Vagina (tissue), 2 donors: ENCODE measurements at regions of chr9 and their contacts with region 1.

Region 1: GRCh38 chr9:71285191-71285656 is 163.8 kb upstream of the TRPM3 start:
- DNase-seq: no peak
- H3K4me3 ChIP-seq: no peak overlapping the region
- H3K27ac ChIP-seq: no peak overlapping the region
- H3K4me1 ChIP-seq: peaks cover 5% of the 10 kb centered on the region
- H3K27me3 ChIP-seq: no peaks in the 10 kb centered on the region
- CTCF ChIP-seq: peak; percentile 71 to 77 (median 73)
- POLR2A ChIP-seq: no peak

Region 2: GRCh38 chr9:71079451-71079850 is 205.8 kb before region 1 on chr9:
- intact Hi-C with region 1: no loop called
- DNase-seq: no peak
- H3K4me3 ChIP-seq: no peak overlapping the region
- H3K27ac ChIP-seq: no peak overlapping the region
- H3K4me1 ChIP-seq: no peaks in the 10 kb centered on the region
- H3K27me3 ChIP-seq: no peaks in the 10 kb centered on the region
- CTCF ChIP-seq: no peak
- POLR2A ChIP-seq: no peak

Region 3: DNA sequence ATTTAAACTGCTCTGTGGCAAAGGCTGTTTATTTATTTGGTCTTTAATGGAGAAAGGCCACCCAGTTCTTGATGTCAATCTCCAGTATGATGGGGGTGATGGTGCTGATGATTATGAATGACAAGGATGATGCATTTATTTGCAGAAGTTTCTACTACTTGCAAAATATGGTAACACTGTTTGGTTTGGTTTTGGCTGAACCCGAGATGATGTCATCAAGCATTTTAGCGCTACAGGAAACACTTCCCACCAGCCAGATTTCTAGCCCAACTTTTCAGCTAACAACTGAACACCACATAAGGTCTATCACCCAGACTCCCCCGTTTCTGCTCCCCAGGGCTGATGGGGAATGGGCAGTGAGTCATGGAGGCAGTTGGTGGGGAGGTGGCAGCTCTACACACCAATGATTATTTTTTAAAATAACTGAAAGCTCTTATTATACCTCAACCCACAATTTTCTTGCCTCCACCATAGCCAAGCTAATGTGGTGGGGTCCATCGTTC is 180.1 kb after region 1 on chr9:
- intact Hi-C with region 1: no loop called
- DNase-seq: no peak
- H3K4me3 ChIP-seq: no peak overlapping the region
- H3K27ac ChIP-seq: no peak overlapping the region
- H3K4me1 ChIP-seq: no peaks in the 10 kb centered on the region
- H3K27me3 ChIP-seq: no peaks in the 10 kb centered on the region
- CTCF ChIP-seq: no peak
- POLR2A ChIP-seq: no peak

Region 4: GRCh38 chr9:71822456-71822855 is 537.2 kb after region 1 on chr9:
- intact Hi-C with region 1: loop called (anchors 10 kb)
- DNase-seq: no peak
- H3K4me3 ChIP-seq: no peak overlapping the region
- H3K27ac ChIP-seq: no peak overlapping the region
- H3K4me1 ChIP-seq: peaks cover 6% of the 10 kb centered on the region
- H3K27me3 ChIP-seq: no peaks in the 10 kb centered on the region
- CTCF ChIP-seq: no peak
- POLR2A ChIP-seq: no peak